GM13977 (cell line): ENCODE measurements at regions of chr2 and their contacts with region 1.

Region 1: GRCh38 chr2:121699421-121700333 is 37.0 kb downstream of the NIFK start:
- DNase-seq: peak; percentile 86
- CTCF ChIP-seq: no peak

Region 2: DNA sequence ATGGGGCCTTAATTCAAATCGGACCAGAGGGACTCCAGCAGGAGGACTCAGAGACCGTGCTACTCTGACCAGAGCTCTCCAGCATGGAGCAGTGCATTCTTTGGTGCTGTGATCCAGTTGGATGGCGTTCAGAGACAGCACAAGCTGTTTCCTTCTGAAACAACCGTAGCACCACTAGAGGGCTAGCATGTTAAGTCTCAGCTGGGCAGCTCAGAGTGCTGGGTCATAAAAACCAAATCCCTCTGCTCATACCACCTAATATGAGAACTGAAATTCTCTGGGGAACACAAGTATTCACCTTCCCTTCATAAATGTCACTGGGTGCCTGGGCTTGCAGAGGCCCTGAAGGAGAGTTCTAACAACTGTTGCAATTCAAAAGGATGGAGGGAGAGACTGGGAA is 316.9 kb before region 1 on chr2:
- in situ Hi-C with region 1: loop called (anchors 25 kb)
- DNase-seq: no peak
- CTCF ChIP-seq: no peak

Region 3: GRCh38 chr2:121804340-121804739 is 104.7 kb after region 1 on chr2:
- in situ Hi-C with region 1: no loop called
- DNase-seq: peak; percentile 67
- CTCF ChIP-seq: no peak